Activated CD8-positive, alpha-beta T cell treated with anti-CD3 and anti-CD28 coated beads for 36 hours (primary cell): ENCODE measurements at regions of chr17 and their contacts with region 1.

Region 1: GRCh38 chr17:42180922-42181850 is at the start of gene KCNH4:
- DNase-seq: peak; percentile 92
- ATAC-seq: peak; percentile 65
- H3K4me3 Mint-ChIP-seq: peak within 1 kb of the TSS; percentile 59
- H3K27ac Mint-ChIP-seq: no peak within 1 kb of the TSS
- H3K4me1 Mint-ChIP-seq: peaks cover 43% of the 10 kb centered on the region
- H3K27me3 Mint-ChIP-seq: peaks cover 21% of the 10 kb centered on the region
- CTCF ChIP-seq: peak; percentile 68
- total RNA-seq, gene KCNH4: 0.38 to 0.43 TPM

Region 2: DNA sequence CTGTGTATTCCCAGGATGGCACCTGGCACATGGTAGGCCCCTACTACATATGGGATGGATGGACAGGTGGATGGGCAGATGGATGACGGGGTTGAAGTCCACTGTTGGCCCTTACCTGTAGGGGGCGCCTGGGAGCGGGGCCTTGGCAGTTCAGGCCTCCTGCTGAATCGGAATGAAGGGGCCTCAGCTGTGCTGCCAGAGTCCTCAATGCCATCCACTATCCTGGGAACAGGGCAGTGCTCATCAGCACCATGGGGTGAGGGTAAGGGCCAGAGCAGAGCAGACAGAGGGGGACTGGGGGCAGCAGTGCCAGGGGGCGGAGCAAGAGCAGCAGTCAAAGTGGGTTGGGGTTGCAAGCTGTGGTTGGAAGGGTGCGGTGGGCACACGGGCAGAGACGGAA is 18.1 kb before region 1 on chr17:
- CTCF ChIA-PET with region 1: interaction called, 23 read pairs
- POLR2A ChIA-PET with region 1: interaction called, 7 read pairs
- intact Hi-C with region 1: no loop called
- DNase-seq: peak; percentile 67
- ATAC-seq: peak; percentile 70
- H3K4me3 Mint-ChIP-seq: no peak overlapping the region
- H3K27ac Mint-ChIP-seq: no peak overlapping the region
- H3K4me1 Mint-ChIP-seq: no peaks in the 10 kb centered on the region
- H3K27me3 Mint-ChIP-seq: no peaks in the 10 kb centered on the region
- CTCF ChIP-seq: peak; percentile 67

Region 3: GRCh38 chr17:42193969-42194899 is 13.0 kb after region 1 on chr17 and contains the start of gene GHDC:
- CTCF ChIA-PET with region 1: interaction called, 21 read pairs
- POLR2A ChIA-PET with region 1: interaction called, 9 read pairs
- intact Hi-C with region 1: no loop called
- DNase-seq: peak; percentile 90
- ATAC-seq: peak; percentile 98
- H3K4me3 Mint-ChIP-seq: peak within 1 kb of the TSS; percentile 88
- H3K27ac Mint-ChIP-seq: peak within 1 kb of the TSS; percentile 91
- H3K4me1 Mint-ChIP-seq: peaks cover 17% of the 10 kb centered on the region
- H3K27me3 Mint-ChIP-seq: no peaks in the 10 kb centered on the region
- CTCF ChIP-seq: no peak
- total RNA-seq, gene GHDC: 12.3 to 14.9 TPM